CD8-positive, alpha-beta memory T cell (primary cell): ENCODE measurements at regions of chr20 and their contacts with region 1.

Region 1: GRCh38 chr20:31879143-31879987 is 8.9 kb downstream of the TTLL9 start:
- DNase-seq: peak; percentile 59 to 89 (median 72)
- H3K4me3 ChIP-seq: peak overlapping the region; percentile 76
- H3K4me3 Mint-ChIP-seq: peak overlapping the region; percentile 84 to 97 (median 93)
- H3K27ac ChIP-seq: no peak overlapping the region
- H3K27ac Mint-ChIP-seq: peak overlapping the region; percentile 68 to 93 (median 84)
- H3K4me1 ChIP-seq: peaks cover 4% of the 10 kb centered on the region
- H3K4me1 Mint-ChIP-seq: peaks cover 10 to 14% (median 14%) of the 10 kb centered on the region in 3 donors
- H3K27me3 ChIP-seq: no peaks in the 10 kb centered on the region
- H3K27me3 Mint-ChIP-seq: peaks cover 7 to 11% of the 10 kb centered on the region in 2 donors

Region 2: GRCh38 chr20:31909253-31910070 is 30.1 kb after region 1 on chr20:
- CTCF ChIA-PET with region 1: no interaction called
- POLR2A ChIA-PET with region 1: interaction called, 14 read pairs
- DNase-seq: no peak
- H3K4me3 ChIP-seq: no peak overlapping the region
- H3K4me3 Mint-ChIP-seq: no peak overlapping the region
- H3K27ac ChIP-seq: no peak overlapping the region
- H3K27ac Mint-ChIP-seq: no peak overlapping the region
- H3K4me1 ChIP-seq: no peaks in the 10 kb centered on the region
- H3K4me1 Mint-ChIP-seq: no peaks in the 10 kb centered on the region
- H3K27me3 ChIP-seq: no peaks in the 10 kb centered on the region
- H3K27me3 Mint-ChIP-seq: peaks cover 2 to 16% of the 10 kb centered on the region in 2 donors

Region 3: DNA sequence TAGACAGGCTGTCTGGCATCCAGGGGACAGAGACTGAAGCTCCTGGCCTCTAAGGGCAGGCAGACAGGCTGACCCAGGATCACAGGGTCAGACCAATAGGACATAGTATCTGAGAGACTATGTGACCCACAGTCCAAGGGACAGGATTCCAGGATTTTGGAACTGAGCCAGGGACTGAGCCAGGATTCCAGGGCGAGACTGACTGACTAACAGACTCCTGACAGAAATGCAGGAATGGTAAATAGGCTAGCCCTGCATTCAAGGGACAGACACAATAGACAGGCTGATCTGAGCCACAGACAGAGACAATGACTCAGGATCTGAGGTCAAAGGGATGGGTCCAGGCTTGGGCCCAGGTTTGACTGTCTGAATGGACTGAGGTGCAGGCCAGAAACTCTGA is 108.4 kb after region 1 on chr20:
- CTCF ChIA-PET with region 1: no interaction called
- POLR2A ChIA-PET with region 1: no interaction called
- DNase-seq: no peak
- H3K4me3 ChIP-seq: no peak overlapping the region
- H3K4me3 Mint-ChIP-seq: no peak overlapping the region
- H3K27ac ChIP-seq: no peak overlapping the region
- H3K27ac Mint-ChIP-seq: no peak overlapping the region
- H3K4me1 ChIP-seq: no peaks in the 10 kb centered on the region
- H3K4me1 Mint-ChIP-seq: no peaks in the 10 kb centered on the region
- H3K27me3 ChIP-seq: no peaks in the 10 kb centered on the region
- H3K27me3 Mint-ChIP-seq: peaks cover 6 to 12% of the 10 kb centered on the region in 2 donors